ENCODE measurements at regions of chr11 and their contacts with region 1.

Region 1: GRCh38 chr11:60363542-60364510 is 14.5 kb upstream of the MS4A7 start:
- DNase-seq: peak; percentile 78
- H3K4me3 ChIP-seq: no peak overlapping the region
- H3K27ac ChIP-seq: no peak overlapping the region
- H3K4me1 ChIP-seq: no peaks in the 10 kb centered on the region
- H3K27me3 ChIP-seq: peaks cover 17% of the 10 kb centered on the region
- CTCF ChIP-seq: peak; percentile 84

Region 2: DNA sequence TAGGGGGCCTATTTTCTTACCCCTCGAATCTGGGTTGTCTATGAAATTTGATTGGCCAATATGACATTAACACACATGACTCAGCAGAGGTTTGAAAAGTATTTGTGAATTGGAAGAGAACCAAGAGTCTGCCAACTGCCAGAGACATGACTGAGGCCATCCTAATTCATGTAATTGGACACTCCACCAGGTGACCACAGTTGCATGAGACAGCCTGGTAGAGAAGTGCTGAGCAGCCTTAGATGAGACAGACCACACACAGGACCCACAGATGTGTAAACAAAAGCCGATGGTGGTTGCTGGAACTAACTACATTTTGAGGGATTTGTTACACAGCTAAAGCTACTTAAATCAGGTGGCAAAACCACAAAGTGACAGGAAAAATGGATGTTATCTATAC is 64.7 kb after region 1 on chr11:
- CTCF ChIA-PET with region 1: no interaction called
- POLR2A ChIA-PET with region 1: no interaction called
- intact Hi-C with region 1: no loop called
- DNase-seq: peak; percentile 5
- H3K4me3 ChIP-seq: no peak overlapping the region
- H3K27ac ChIP-seq: no peak overlapping the region
- H3K4me1 ChIP-seq: no peaks in the 10 kb centered on the region
- H3K27me3 ChIP-seq: peaks cover 13% of the 10 kb centered on the region
- CTCF ChIP-seq: no peak

Region 3: DNA sequence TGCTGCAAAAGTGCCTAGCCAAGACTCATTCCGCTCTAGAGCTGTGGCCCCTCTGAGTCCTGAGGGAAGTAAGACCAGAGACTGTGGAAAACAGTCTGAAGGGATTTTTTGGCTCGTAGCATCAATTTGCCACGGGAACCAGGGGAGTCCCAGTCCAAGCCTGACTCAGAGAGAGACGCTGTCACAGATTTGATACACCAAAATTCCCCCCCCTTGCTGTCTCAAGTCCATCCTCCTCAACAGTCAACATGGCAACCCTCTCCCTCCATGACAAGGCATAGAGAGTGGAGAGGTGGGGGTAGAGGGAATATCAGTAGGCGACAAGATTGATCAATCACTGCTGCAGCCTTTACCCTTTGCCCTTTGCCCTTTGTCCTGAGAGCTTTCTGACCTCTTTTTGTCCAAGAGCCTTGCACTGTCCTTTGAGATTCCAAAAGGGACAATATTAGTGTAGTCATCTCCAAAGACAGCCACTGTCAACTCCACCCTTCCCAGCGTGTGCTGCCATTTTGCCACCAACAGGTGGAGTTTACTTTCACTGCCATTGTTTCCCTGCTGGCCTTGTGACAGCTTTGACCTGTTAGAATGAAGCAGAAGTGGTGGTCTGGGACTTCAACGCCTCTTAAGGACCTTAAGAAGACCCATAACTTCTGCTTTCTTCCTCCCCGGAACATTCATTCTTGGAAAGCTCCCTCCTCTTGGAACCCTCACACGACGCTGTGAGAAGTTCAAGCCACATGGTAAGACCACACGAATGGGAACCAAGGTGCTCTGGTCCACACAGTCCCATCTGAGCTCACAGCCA is 580.9 kb after region 1 on chr11:
- CTCF ChIA-PET with region 1: interaction called, 16 read pairs
- POLR2A ChIA-PET with region 1: no interaction called
- intact Hi-C with region 1: no loop called
- DNase-seq: no peak
- H3K4me3 ChIP-seq: no peak overlapping the region
- H3K27ac ChIP-seq: no peak overlapping the region
- H3K4me1 ChIP-seq: no peaks in the 10 kb centered on the region
- H3K27me3 ChIP-seq: no peaks in the 10 kb centered on the region
- CTCF ChIP-seq: peak; percentile 35; the same call in 1 of the 2 replicates

Measured in A673 (cell line).